Dendritic cell treated with granulocyte-macrophage colony-stimulating factor and Interleukin-4, amounts not matched to agents 40 ng/mL and 50 ng/mL, for 4 days (primary cell): ENCODE measurements at regions of chr12 and their contacts with region 1.

Region 1: DNA sequence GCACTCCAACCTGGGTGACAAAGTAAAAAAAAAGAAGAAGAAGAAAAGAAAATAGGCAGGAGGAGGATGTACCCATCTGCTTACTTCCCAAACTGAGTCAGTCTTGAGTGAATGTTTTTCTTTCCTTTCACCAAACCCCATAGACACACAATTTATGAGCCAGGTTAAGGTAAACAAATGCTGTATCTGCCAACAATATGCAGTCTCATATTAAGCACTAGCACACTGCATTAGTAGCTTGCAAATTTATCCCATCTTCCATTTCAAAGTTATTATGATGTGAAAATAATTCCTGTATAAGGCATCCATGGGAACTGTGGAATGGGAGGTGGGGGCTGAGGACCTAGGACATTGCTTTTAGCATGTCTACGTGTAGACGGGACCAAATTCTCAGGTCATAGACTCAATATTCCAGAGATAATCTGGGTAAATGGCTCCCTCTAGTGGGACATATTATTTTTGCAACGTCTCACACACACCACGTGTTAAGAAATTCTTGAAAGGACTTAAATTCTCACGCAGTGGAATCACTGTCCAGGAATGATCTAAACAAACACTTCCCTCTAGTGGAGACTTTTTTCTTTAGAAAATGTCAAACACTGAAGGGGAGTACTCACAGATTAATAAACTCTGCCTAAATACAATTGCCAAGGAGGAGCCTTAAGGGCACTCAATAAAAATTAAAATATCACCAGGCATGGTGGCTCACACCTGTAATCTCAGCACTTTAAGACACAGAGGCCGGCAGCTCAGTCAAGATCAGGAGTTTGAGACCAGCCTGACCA is 17.1 kb upstream of the OR10P1 start:
- H3K4me3 Mint-ChIP-seq: no peak overlapping the region
- H3K27ac Mint-ChIP-seq: no peak overlapping the region
- H3K4me1 Mint-ChIP-seq: peaks cover 8% of the 10 kb centered on the region
- H3K27me3 Mint-ChIP-seq: peaks cover 12% of the 10 kb centered on the region

Region 2: DNA sequence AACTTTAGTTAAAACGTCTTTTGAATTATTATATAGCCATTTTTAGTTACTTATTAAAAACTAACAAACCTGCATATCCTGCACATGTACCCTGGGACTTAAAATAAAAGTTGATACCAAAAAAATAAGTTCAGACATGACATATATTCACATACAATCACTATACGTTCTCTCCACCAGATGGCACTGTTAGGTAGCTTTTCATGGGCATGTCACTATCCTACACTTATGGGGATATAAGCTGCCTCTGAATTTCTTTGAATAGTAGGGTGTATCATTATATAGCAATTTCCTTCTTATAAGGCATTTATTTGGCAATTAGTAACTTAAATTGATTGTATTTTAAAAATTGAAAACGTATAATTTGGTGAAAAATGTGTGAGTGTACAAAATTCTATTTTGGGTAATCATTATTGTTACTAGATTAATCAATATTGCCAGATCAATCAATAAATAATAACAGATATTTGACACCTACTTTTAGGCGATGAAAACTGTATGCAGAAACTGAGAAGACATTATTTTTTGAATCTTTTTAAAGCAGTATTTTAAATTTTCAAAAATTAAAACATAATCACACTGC is 430.5 kb before region 1 on chr12:
- intact Hi-C with region 1: loop called (anchors 1 kb)
- H3K4me3 Mint-ChIP-seq: no peak overlapping the region
- H3K27ac Mint-ChIP-seq: no peak overlapping the region
- H3K4me1 Mint-ChIP-seq: no peaks in the 10 kb centered on the region
- H3K27me3 Mint-ChIP-seq: peaks cover 8% of the 10 kb centered on the region